Activated naive CD4-positive, alpha-beta T cell treated with anti-CD3 and anti-CD28 coated beads for 36 hours (primary cell): ENCODE measurements at regions of chr11 and their contacts with region 1.

Region 1: DNA sequence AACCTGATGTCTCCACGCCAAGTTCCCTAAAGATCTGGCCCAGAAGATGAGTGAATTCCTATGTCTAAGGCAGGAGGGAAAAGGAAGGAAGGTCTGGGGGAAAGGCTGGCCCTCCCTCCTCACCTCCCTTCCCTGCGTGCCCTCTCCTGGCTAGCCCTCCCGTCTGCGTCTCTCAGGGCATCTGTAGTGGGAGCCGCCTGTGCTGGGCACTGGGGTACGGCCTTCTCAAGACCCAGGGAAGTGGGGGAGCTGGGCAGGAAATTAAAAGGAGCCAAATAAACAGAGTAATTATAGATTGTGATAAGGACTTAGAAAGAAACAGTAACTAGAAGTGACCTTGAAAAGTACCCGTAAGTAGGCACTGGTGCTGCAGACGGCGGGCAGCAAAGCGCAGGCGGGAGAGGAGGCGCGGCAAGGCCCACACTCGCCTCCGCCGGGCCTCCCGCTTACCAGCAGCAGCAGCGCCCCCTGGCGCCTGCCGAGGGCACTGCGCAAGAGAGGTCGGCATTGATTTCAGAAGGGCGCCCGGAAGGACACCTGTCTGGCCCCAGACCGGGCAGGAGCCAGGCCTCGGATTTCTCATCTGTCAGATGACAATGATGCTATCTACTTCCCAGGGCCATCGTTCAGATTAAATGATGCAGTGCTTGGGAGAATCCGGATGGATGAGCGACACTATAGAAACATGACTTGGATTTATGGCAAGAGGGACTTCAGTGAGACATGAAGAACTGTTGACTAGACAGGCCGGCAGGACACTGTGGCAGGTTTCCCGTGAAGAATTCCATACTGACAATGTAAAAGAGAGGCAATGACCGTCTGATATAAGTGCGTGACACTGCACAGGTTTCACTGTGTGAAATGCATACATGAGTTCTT is 7.3 kb downstream of the KCNJ1 start:
- DNase-seq: peak; percentile 85
- H3K4me3 Mint-ChIP-seq: no peak overlapping the region
- H3K27ac Mint-ChIP-seq: no peak overlapping the region
- H3K4me1 Mint-ChIP-seq: peaks cover 3% of the 10 kb centered on the region
- H3K27me3 Mint-ChIP-seq: no peaks in the 10 kb centered on the region

Region 2: DNA sequence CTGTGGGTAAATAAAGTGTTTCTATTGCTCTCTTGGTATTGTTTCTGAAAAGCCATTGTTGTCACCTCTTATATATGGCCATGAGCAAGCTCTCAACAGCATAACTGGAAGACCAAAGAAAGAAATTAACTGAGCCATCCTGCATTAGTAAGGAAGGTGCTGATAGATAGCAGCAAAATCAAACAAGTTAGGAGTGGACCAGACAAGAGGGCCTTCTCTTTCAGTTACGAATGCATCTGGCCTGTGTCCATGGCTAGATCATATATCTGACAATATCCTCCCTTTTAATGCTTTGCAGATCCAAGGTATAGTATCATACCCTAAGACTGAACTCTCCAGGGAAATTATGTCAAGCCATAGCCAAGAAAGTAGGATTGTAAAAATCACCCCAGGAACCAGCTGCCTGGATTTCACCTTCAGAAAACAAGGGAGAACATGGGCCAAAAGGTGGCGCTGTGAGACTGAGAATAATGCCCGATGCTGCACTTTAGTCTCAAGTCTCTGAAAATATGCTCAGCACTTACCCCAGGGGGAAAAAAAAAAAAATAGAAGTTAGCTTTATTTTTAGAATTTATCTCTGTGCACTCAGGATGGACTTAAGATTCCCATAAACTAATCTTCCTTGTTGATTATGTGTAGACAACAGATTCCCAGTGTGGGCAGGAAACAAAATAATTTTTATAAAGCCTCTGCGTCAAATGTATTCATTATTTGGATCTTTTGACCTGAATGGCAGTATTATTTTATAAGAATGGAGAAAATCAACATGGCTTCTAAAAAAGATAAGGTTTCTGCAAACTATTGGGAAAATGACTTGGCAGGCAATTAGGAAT is 687.5 kb before region 1 on chr11:
- CTCF ChIA-PET with region 1: interaction called, 11 read pairs
- intact Hi-C with region 1: loop called (anchors 1 kb)
- DNase-seq: peak; percentile 96
- H3K4me3 Mint-ChIP-seq: no peak overlapping the region
- H3K27ac Mint-ChIP-seq: no peak overlapping the region
- H3K4me1 Mint-ChIP-seq: peaks cover 7% of the 10 kb centered on the region
- H3K27me3 Mint-ChIP-seq: no peaks in the 10 kb centered on the region

Region 3: DNA sequence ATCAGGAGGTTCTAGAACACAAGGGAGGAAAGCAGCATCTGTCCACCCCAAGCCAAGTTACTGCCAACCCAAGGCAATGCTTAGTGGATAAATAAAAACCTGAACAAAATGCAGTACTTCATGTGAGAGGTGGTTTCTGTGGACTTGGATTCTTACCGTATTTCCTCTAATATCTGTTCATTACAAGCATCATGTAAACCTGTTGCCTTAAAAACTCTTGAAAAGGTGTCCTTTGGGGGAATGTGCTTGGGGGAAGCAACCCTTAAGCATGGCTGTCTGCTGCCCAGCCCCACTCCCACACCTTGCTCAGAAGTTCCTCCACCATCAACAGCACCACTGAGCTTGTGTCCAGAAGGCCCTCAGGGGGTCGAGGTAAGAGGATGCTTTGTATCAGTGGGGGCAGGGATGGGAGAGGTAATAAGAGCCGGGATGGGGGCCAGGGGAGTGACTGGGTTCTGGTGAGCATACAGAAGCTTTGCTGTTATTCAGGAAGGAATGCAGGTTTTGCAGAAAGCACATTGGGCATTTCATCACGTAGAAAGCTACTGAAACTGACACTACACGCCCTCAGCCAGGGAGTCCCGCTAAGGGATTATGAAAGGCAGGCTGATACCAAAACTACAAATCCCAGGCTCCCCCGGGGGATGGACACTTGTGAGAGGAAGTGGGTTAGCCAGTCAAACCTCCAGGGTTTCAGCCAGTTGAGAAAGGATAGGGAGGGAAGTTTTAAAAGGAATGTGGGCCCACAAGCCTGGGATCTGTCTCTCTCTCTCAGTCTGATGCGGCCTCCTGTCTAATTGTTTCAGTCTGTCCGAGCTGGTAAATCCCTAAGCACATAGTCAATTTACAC is 44.7 kb before region 1 on chr11:
- CTCF ChIA-PET with region 1: no interaction called
- intact Hi-C with region 1: no loop called
- DNase-seq: no peak
- H3K4me3 Mint-ChIP-seq: no peak overlapping the region
- H3K27ac Mint-ChIP-seq: no peak overlapping the region
- H3K4me1 Mint-ChIP-seq: no peaks in the 10 kb centered on the region
- H3K27me3 Mint-ChIP-seq: no peaks in the 10 kb centered on the region

Region 4: GRCh38 chr11:128848815-128849455 is 10.9 kb before region 1 on chr11:
- CTCF ChIA-PET with region 1: interaction called, 25 read pairs
- intact Hi-C with region 1: no loop called
- DNase-seq: peak; percentile 80
- H3K4me3 Mint-ChIP-seq: no peak overlapping the region
- H3K27ac Mint-ChIP-seq: no peak overlapping the region
- H3K4me1 Mint-ChIP-seq: peaks cover 13% of the 10 kb centered on the region
- H3K27me3 Mint-ChIP-seq: no peaks in the 10 kb centered on the region

Region 5: GRCh38 chr11:128956401-128957201 is 96.8 kb after region 1 on chr11:
- CTCF ChIA-PET with region 1: no interaction called
- intact Hi-C with region 1: no loop called
- DNase-seq: peak; percentile 46
- H3K4me3 Mint-ChIP-seq: no peak overlapping the region
- H3K27ac Mint-ChIP-seq: no peak overlapping the region
- H3K4me1 Mint-ChIP-seq: no peaks in the 10 kb centered on the region
- H3K27me3 Mint-ChIP-seq: peaks cover 3% of the 10 kb centered on the region

Region 6: DNA sequence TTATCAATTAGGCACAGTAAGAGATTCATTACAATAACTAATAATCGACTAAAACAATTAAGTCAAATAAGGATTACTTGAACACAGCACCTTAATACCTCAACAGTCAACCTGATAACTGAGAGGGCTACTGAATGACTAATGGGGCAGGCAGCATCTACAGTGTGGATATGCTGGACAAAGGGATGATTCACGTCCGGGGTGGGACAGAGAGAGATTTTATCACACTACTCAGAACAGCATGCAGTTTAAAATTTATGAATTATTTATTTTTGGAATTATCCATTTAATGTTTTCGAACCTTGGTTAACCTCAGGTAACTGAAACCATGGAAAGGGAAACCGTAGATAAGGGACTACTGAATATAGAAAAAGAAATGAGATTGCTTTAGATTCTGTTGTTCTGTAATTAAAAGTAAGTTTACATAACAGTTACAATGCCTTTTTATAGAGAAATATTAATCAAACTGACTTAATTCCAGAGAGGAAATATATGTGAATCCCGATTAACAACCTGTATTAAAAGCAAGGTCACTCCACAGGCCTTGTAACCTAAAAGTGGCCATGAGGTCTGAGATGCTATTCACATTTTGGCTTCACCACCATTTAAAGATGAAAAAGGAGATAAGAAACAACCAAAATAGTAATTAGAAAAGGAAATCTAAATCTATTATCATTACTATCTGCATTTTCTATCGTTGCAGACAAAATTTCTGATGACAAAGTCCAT is 201.8 kb after region 1 on chr11:
- CTCF ChIA-PET with region 1: no interaction called
- intact Hi-C with region 1: no loop called
- DNase-seq: no peak
- H3K4me3 Mint-ChIP-seq: no peak overlapping the region
- H3K27ac Mint-ChIP-seq: no peak overlapping the region
- H3K4me1 Mint-ChIP-seq: no peaks in the 10 kb centered on the region
- H3K27me3 Mint-ChIP-seq: no peaks in the 10 kb centered on the region